Activated CD4-positive, alpha-beta T cell treated with anti-CD3 and anti-CD28 coated beads for 36 hours (primary cell): ENCODE measurements at regions of chr5 and their contacts with region 1.

Region 1: GRCh38 chr5:141564216-141564692 is 54.5 kb downstream of the DIAPH1 start:
- DNase-seq: peak; percentile 75
- ATAC-seq: peak; percentile 90
- H3K4me3 Mint-ChIP-seq: peak overlapping the region; percentile 12
- H3K27ac Mint-ChIP-seq: peak overlapping the region; percentile 74
- H3K4me1 Mint-ChIP-seq: peaks cover 41% of the 10 kb centered on the region
- H3K27me3 Mint-ChIP-seq: no peaks in the 10 kb centered on the region

Region 2: DNA sequence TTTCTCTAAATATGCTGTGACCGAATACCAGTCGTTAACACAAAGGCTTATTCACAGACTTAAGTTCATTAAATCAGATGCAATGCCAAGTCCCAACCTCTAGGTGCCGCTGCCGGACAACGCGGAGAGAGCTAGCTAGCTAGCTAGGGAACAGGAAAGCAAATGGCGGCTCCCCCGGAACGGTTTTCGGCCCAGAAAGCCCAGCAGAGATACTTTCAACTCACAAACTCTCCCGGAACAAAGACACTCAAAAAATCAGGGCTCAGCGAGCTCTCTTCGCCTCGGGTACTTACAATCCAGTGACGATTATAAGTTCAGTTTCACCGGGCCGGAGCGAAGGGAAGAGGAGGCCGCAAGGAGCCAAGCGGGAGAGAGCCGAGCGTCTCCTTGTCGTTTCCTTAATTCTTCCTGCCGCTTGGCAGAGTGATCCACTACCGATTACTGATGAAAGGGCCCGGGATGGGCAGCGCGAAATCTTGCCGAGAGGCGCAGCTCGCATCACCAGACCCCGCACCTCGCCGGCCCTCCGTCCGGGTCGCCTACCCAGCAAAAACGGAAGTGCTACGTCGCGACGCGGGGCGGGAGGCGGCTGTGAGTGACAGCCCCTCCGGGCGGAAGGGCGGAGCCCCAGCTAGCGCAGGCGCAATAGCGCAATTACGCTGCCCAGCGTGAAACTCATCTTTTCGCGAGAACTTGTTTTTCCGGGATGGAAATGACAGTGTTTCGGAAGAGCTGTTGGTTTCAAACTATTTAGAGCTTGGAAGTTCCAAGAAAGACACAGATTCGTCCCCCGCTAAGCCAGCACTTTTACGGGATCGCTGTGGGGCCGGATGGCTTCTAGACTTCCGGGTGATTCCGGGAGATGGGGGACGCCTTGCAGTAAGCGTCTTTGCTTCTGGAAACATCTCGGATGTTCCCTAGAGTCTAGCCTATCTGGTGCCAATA is 243.8 kb before region 1 on chr5 and contains the start of gene TAF7:
- CTCF ChIA-PET with region 1: interaction called, 25 read pairs
- POLR2A ChIA-PET with region 1: no interaction called
- intact Hi-C with region 1: loop called (anchors 1 to 5 kb)
- DNase-seq: peak; percentile 96
- ATAC-seq: peak; percentile 96
- H3K4me3 Mint-ChIP-seq: peak within 1 kb of the TSS; percentile 91
- H3K27ac Mint-ChIP-seq: peak within 1 kb of the TSS; percentile 100
- H3K4me1 Mint-ChIP-seq: peaks cover 23% of the 10 kb centered on the region
- H3K27me3 Mint-ChIP-seq: peaks cover 2% of the 10 kb centered on the region
- total RNA-seq, gene TAF7: 45.2 to 54.4 TPM

Region 3: GRCh38 chr5:141412854-141413539 is 151.3 kb before region 1 on chr5 and contains the start of gene PCDHGA10:
- CTCF ChIA-PET with region 1: interaction called, 46 read pairs
- POLR2A ChIA-PET with region 1: no interaction called
- intact Hi-C with region 1: loop called (anchors 1 to 2 kb)
- DNase-seq: peak; percentile 74
- ATAC-seq: peak; percentile 76
- H3K4me3 Mint-ChIP-seq: peak within 1 kb of the TSS; percentile 62
- H3K27ac Mint-ChIP-seq: no peak within 1 kb of the TSS
- H3K4me1 Mint-ChIP-seq: peaks cover 10% of the 10 kb centered on the region
- H3K27me3 Mint-ChIP-seq: peaks cover 63% of the 10 kb centered on the region
- total RNA-seq, gene PCDHGA10: 0.07 TPM in 1 of 2 experiments, not detected in the other

Region 4: GRCh38 chr5:141475625-141476131 is 88.6 kb before region 1 on chr5 and contains the start of gene PCDHGC3:
- CTCF ChIA-PET with region 1: interaction called, 11 read pairs
- POLR2A ChIA-PET with region 1: no interaction called
- intact Hi-C with region 1: loop called in 1 of 2 experiments (anchors 2 kb)
- DNase-seq: peak; percentile 79
- ATAC-seq: peak; percentile 97
- H3K4me3 Mint-ChIP-seq: peak within 1 kb of the TSS; percentile 82
- H3K27ac Mint-ChIP-seq: peak within 1 kb of the TSS; percentile 37
- H3K4me1 Mint-ChIP-seq: peaks cover 28% of the 10 kb centered on the region
- H3K27me3 Mint-ChIP-seq: peaks cover 47% of the 10 kb centered on the region
- total RNA-seq, gene PCDHGC3: 0.16 to 0.34 TPM

Region 5: DNA sequence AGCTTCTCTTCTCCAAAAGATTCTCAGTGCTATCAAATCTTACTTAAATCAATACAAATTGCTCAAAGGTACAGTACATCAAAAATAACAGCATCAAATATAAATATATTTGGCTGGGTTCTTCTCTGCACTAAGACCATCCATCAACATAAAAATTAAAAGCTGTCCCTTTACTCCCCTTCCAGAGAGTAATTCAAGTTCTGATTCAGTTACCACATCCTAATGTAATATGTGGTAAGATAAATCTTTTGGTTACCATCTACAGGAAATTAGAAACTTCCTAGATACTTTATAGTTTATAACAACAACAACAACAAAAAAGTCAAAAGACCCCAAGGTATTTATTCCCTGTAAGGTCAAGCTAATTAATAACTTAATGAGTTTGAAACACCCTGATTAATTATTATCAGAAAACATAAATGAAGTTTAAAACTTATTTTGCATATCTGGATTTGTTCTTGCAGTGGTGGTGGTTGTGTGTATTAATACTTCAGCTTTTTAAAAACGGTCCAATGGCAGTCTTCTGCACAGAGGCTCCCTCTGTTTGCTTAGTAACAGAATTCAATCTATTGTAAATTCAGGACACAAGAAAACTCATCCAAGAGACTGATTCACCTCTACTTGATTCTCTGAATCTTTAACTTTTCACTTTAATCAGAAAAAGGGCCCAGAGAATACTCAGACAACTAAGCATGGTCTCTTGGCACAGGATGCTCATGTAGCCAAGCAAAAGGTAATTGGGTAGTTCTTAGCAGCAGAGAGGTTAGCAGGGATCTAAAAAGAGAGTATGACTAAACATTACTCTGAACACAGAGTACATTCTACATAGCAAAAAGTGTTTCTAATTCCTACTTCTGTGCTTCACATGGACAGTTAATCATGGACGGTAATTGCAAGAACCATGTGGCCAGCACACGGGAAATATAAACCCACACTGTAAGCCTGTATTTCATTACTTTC is 34.4 kb after region 1 on chr5:
- CTCF ChIA-PET with region 1: interaction called, 23 read pairs
- POLR2A ChIA-PET with region 1: no interaction called
- intact Hi-C with region 1: no loop called
- DNase-seq: no peak
- ATAC-seq: peak; percentile 91
- H3K4me3 Mint-ChIP-seq: no peak overlapping the region
- H3K27ac Mint-ChIP-seq: peak overlapping the region; percentile 51
- H3K4me1 Mint-ChIP-seq: peaks cover 74% of the 10 kb centered on the region
- H3K27me3 Mint-ChIP-seq: no peaks in the 10 kb centered on the region

Region 6: DNA sequence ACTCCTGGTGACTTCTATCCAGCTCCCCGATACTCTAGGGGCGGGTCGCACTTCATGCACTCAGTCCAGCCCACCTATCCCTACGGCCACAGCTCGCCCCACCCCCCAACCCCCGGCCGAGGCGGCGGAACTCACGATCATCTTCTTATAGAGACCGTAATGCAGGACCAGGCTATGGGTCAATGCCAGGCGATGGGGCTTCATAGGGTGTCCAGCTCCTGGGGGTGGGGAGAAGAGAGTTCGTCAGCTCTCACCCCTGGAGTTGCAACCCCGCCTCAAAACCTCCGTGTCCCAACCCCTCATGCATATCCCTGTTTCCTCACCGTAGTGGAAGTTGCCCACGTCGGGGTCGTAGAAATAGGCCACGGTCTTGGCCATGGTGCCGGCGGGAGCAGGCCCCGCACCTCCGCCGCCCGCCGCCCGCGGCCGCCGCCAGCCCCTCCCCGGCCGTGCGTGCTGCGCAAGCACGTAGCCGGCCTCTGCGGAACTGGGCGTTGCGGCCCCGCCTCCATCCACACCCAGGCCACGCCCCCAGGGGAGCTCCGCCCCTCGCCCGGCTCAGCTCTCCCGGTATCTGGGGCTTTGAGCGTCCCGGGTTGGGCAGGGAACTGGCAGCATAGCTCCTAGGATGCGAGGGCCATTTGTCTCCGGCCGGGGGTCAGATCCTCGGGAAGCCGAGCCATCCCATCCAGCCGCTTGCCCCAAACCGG is 72.3 kb after region 1 on chr5 and contains the starts of genes HDAC3 and RELL2:
- CTCF ChIA-PET with region 1: interaction called, 25 read pairs
- POLR2A ChIA-PET with region 1: interaction called, 3 read pairs
- intact Hi-C with region 1: loop called in 1 of 2 experiments (anchors 1 kb)
- DNase-seq: peak; percentile 97
- ATAC-seq: peak; percentile 82
- H3K4me3 Mint-ChIP-seq: peak within 1 kb of the TSS; percentile 92
- H3K27ac Mint-ChIP-seq: peak within 1 kb of the TSS; percentile 92
- H3K4me1 Mint-ChIP-seq: peaks cover 45% of the 10 kb centered on the region
- H3K27me3 Mint-ChIP-seq: no peaks in the 10 kb centered on the region
- total RNA-seq, gene HDAC3: 85.9 to 88.6 TPM
- total RNA-seq, gene RELL2: 24.3 to 27.8 TPM